HEK293 (cell line): ENCODE measurements at regions of chr9 and their contacts with region 1.

Region 1: DNA sequence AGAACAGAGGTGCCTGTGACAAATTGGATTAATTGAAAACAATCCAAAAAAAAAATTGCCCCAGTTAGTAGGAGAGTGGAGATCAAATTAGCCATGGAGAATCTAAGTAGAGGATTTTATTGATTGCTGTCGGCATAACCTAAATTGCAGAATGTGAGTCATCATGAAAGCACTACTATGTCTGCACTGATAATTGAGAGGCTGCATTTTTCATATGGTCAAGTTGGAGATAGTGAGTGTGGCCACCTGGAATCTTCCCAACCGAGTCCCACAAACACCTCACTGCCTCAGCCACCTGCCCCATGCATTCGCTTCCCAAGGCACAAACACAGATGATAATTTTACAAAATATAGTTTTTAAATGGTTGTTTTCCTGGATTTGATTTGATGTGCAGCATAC is 123.7 kb downstream of the NTRK2 start:
- H3K4me3 ChIP-seq: no peak overlapping the region
- H3K27ac ChIP-seq: no peak overlapping the region
- H3K4me1 ChIP-seq: no peaks in the 10 kb centered on the region
- CTCF ChIP-seq: no peak

Region 2: DNA sequence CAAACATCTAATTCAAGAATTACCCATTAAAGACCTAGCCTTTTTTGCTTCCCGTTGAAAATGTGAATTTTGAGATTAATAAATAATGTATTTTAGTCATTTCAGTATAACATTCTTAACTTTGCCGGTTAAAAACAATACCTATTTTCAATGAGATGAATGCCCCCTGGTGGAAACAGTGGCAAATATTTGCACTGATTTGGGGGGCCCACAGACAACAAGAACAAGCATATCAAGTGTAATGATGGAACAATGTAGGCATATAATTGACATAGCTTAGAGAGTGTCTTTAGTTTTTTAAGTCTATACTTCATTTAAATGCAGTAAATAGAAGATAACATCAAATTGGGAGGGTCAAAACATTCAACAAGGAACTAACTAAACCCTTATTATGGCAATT is 11.8 kb before region 1 on chr9:
- CTCF ChIA-PET with region 1: interaction called, 14 read pairs
- POLR2A ChIA-PET with region 1: no interaction called
- H3K4me3 ChIP-seq: no peak overlapping the region
- H3K27ac ChIP-seq: no peak overlapping the region
- H3K4me1 ChIP-seq: no peaks in the 10 kb centered on the region
- CTCF ChIP-seq: no peak